ENCODE measurements at regions of chr1 and their contacts with region 1.

Region 1: GRCh38 chr1:67500413-67500959 is 70.3 kb upstream of the SERBP1 start:
- DNase-seq: peak; percentile 92
- ATAC-seq: peak; percentile 100
- H3K4me3 Mint-ChIP-seq: peak overlapping the region; percentile 18
- H3K27ac Mint-ChIP-seq: no peak overlapping the region
- H3K4me1 Mint-ChIP-seq: peaks cover 4% of the 10 kb centered on the region
- H3K27me3 Mint-ChIP-seq: peaks cover 9% of the 10 kb centered on the region

Region 2: DNA sequence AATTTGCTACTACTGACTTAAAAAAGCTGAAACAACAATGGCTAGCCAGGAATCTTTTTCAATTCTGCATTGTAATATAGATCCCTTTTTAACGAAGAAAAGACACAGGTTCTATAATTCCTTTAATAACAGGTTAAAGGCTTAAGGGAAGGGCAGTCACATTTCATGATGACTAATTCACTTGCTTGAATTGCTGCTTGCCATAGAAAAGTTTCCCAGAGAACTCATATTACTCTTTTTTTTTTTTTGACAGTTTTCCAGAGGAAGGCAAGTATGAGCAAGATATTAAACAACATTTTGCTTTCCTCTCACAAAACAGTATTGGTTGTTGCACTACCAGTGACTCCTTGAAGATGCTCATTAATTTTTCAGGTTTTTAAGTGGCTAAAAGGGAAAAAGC is 273.3 kb before region 1 on chr1:
- CTCF ChIA-PET with region 1: interaction called, 11 read pairs
- POLR2A ChIA-PET with region 1: no interaction called
- DNase-seq: no peak
- ATAC-seq: no peak
- H3K4me3 Mint-ChIP-seq: no peak overlapping the region
- H3K27ac Mint-ChIP-seq: no peak overlapping the region
- H3K4me1 Mint-ChIP-seq: peaks cover 5% of the 10 kb centered on the region
- H3K27me3 Mint-ChIP-seq: peaks cover 7% of the 10 kb centered on the region

Region 3: GRCh38 chr1:67239738-67240137 is 260.7 kb before region 1 on chr1:
- CTCF ChIA-PET with region 1: interaction called, 15 read pairs
- POLR2A ChIA-PET with region 1: no interaction called
- DNase-seq: no peak
- ATAC-seq: no peak
- H3K4me3 Mint-ChIP-seq: no peak overlapping the region
- H3K27ac Mint-ChIP-seq: no peak overlapping the region
- H3K4me1 Mint-ChIP-seq: peaks cover 17% of the 10 kb centered on the region
- H3K27me3 Mint-ChIP-seq: peaks cover 3% of the 10 kb centered on the region

Region 4: GRCh38 chr1:67304023-67304422 is 196.5 kb before region 1 on chr1:
- CTCF ChIA-PET with region 1: no interaction called
- POLR2A ChIA-PET with region 1: no interaction called
- DNase-seq: peak; percentile 12
- ATAC-seq: peak; percentile 25
- H3K4me3 Mint-ChIP-seq: peak overlapping the region; percentile 40
- H3K27ac Mint-ChIP-seq: peak overlapping the region; percentile 86
- H3K4me1 Mint-ChIP-seq: peaks cover 66% of the 10 kb centered on the region
- H3K27me3 Mint-ChIP-seq: no peaks in the 10 kb centered on the region

Region 5: DNA sequence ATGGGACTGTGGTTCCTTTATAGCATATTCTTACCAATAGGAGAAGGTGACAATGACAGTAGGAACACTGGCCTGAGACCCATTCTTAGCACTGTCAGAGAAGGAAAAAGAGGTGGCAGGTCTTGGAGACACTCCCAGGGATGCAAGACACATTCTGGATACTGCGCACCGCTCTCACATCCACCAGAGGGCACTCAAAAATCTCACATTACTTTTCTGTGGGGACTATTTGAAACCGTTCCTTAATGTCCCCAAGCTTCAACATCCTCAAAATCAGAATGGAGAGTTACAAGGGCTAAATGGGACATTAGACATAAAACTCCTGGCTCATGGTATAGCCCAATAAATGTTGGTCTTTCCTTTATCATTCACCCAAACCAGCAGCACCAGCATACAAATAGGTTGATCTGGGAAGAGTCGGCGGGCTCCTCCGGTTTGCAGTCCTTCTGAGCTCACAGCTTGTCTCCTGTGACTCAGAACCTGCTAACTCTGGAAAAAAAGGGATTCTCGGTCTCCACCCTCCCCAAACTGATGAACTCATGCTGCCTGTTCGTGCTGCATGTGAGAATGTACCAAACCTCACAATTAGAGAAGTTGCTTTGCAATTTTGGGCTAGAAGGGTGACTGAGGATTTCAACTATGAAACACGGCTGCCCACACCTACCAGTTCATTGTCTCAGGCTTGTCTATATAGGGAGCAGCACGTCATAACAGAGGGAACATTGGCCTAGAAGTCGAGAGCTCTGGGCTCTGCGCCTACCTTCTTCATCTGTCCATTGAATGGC is 152.6 kb before region 1 on chr1:
- CTCF ChIA-PET with region 1: interaction called, 15 read pairs
- POLR2A ChIA-PET with region 1: no interaction called
- DNase-seq: no peak
- ATAC-seq: peak; percentile 35
- H3K4me3 Mint-ChIP-seq: no peak overlapping the region
- H3K27ac Mint-ChIP-seq: no peak overlapping the region
- H3K4me1 Mint-ChIP-seq: peaks cover 21% of the 10 kb centered on the region
- H3K27me3 Mint-ChIP-seq: no peaks in the 10 kb centered on the region

Region 6: DNA sequence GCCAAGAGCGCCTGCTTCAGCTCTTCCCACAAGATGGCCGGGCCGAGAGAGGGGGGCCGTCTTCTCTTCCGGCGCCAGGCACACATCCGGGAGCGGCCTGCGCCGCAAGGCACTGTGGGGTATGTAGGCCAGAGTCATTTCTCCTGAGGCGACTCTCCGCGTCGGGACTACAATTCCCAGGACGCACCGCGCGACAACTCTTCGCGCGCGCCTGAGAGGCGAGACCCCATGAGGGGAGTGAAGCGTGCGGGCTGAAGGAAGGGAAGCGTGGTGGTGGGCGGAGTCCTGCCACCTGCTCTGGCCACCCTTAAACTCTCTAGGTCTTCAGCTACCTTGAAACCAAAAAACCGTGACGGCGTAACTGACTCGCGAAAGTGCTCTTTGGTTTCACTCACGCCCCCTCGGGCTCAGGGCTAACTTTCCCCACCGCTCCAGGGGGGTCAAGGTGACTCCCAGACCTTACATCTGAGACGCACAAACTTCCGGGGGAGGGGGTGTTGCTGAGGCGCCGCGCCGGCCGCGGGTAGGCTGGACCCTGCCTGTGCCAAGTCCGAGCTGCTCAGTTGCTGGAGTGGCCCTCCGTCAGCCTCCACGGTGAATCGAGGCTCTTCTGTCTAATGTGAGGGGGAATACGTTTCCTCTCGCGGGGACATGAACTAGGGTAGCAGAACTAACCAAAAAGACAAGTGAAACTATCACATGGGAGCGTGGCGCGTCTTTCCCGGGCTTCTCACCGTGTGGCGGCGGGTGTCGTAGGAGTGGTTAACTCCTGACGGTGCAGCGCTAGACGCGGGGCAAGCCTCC is 69.9 kb before region 1 on chr1 and contains the start of gene SERBP1:
- CTCF ChIA-PET with region 1: interaction called, 32 read pairs
- POLR2A ChIA-PET with region 1: no interaction called
- DNase-seq: peak; percentile 97
- ATAC-seq: peak; percentile 82
- H3K4me3 Mint-ChIP-seq: peak within 1 kb of the TSS; percentile 78
- H3K27ac Mint-ChIP-seq: peak within 1 kb of the TSS; percentile 91
- H3K4me1 Mint-ChIP-seq: peaks cover 46% of the 10 kb centered on the region
- H3K27me3 Mint-ChIP-seq: no peaks in the 10 kb centered on the region
- total RNA-seq, gene SERBP1: 280 to 297 TPM

Region 7: GRCh38 chr1:67489643-67490042 is 10.8 kb before region 1 on chr1:
- CTCF ChIA-PET with region 1: interaction called, 28 read pairs
- POLR2A ChIA-PET with region 1: no interaction called
- DNase-seq: no peak
- ATAC-seq: peak; percentile 53
- H3K4me3 Mint-ChIP-seq: no peak overlapping the region
- H3K27ac Mint-ChIP-seq: no peak overlapping the region
- H3K4me1 Mint-ChIP-seq: no peaks in the 10 kb centered on the region
- H3K27me3 Mint-ChIP-seq: peaks cover 4% of the 10 kb centered on the region

Region 8: DNA sequence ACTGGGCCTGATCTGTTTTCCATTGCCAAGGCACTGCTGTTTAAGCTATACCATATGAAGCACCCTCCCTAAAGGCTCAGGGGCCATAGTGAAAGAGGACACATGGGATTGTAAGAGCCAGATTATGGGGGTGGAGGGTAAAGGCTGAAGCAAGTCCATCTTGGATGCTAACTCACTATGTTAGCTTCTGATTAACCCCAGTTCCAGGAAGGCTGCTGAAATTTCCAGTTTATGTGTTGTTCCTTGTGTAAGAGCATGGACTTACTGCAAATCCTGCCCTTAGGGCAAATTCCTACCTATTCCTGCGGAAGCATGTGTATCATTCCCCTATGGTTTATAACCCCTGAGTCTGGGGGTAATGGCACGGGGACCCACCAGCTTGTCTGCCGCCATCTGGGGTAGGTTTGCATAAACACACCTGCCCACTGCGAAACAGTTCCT is 21.5 kb after region 1 on chr1:
- CTCF ChIA-PET with region 1: interaction called, 10 read pairs
- POLR2A ChIA-PET with region 1: no interaction called
- DNase-seq: no peak
- ATAC-seq: no peak
- H3K4me3 Mint-ChIP-seq: no peak overlapping the region
- H3K27ac Mint-ChIP-seq: no peak overlapping the region
- H3K4me1 Mint-ChIP-seq: no peaks in the 10 kb centered on the region
- H3K27me3 Mint-ChIP-seq: peaks cover 1% of the 10 kb centered on the region